CD4-positive, alpha-beta T cell (primary cell): ENCODE measurements at regions of chr4 and their contacts with region 1.

Region 1: GRCh38 chr4:182917182-182918043 is at the start of gene DCTD:
- DNase-seq: peak; percentile 54 to 90 (median 78)
- ATAC-seq: peak; percentile 78
- H3K4me3 ChIP-seq: peak within 1 kb of the TSS; percentile 85
- H3K4me3 Mint-ChIP-seq: peak within 1 kb of the TSS; percentile 93
- H3K27ac ChIP-seq: peak within 1 kb of the TSS; percentile 89 to 96
- H3K27ac Mint-ChIP-seq: peak within 1 kb of the TSS; percentile 89
- H3K4me1 ChIP-seq: peaks cover 42% of the 10 kb centered on the region
- H3K4me1 Mint-ChIP-seq: peaks cover 48% of the 10 kb centered on the region
- H3K27me3 ChIP-seq: no peaks in the 10 kb centered on the region
- H3K27me3 Mint-ChIP-seq: no peaks in the 10 kb centered on the region
- CTCF ChIP-seq: peak; percentile 42
- total RNA-seq, gene DCTD: 49.4 to 54.3 TPM

Region 2: GRCh38 chr4:183398227-183399125 is 481.1 kb after region 1 on chr4:
- CTCF ChIA-PET with region 1: no interaction called
- POLR2A ChIA-PET with region 1: interaction called, 3 read pairs
- intact Hi-C with region 1: loop called in 1 of 2 experiments (anchors 5 kb)
- DNase-seq: peak; percentile 35 to 82 (median 52)
- ATAC-seq: peak; percentile 90
- H3K4me3 ChIP-seq: peak overlapping the region; percentile 63
- H3K4me3 Mint-ChIP-seq: peak overlapping the region; percentile 90
- H3K27ac ChIP-seq: no peak overlapping the region
- H3K27ac Mint-ChIP-seq: no peak overlapping the region
- H3K4me1 ChIP-seq: peaks cover 18% of the 10 kb centered on the region
- H3K4me1 Mint-ChIP-seq: peaks cover 31% of the 10 kb centered on the region
- H3K27me3 ChIP-seq: peaks cover 0 to 4% of the 10 kb centered on the region in 2 experiments
- H3K27me3 Mint-ChIP-seq: peaks cover 22% of the 10 kb centered on the region
- CTCF ChIP-seq: peak; percentile 69

Region 3: DNA sequence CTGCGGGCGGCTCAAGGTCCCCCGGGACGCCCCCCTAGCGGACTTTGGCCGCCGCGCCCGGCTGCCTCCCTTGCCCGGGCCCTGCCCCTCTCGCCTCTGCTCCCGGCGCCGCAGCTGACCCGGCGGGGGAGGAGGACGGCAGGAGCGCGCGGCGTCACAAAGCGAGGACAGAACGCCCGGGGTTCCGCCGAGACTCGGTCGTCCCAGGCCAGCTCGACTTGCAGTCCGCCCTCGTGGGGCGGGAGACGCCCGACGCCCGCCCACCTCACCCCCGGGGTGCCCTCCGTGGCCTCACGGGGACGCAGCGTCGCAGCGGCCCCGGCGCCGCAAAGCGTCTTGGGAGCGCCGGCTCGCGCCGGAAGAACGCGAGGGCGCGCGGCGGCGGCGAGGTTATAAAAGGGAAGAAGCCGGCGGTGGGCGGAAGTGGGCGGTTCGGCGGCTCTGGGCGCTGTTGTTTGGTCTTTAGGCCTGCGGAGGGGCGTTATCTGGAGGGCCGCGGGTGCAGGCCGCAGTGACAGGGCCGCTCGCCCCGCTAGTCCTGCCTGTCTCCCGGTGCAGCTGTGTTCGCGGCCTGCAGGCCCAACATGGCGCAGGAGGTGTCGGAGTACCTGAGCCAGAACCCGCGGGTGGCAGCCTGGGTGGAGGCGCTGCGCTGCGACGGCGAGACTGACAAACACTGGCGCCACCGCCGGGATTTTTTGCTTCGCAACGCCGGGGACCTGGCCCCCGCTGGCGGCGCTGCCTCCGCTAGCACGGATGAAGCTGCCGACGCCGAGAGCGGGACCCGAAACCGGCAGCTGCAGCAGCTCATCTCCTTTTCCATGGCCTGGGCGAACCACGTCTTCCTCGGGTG is 527.0 kb after region 1 on chr4 and contains the start of gene CDKN2AIP:
- CTCF ChIA-PET with region 1: no interaction called
- POLR2A ChIA-PET with region 1: interaction called, 14 read pairs
- intact Hi-C with region 1: loop called in 1 of 2 experiments (anchors 5 kb)
- DNase-seq: peak; percentile 89 to 98 (median 94)
- ATAC-seq: peak; percentile 82
- H3K4me3 ChIP-seq: peak within 1 kb of the TSS; percentile 94
- H3K4me3 Mint-ChIP-seq: peak within 1 kb of the TSS; percentile 98
- H3K27ac ChIP-seq: peak within 1 kb of the TSS; percentile 91
- H3K27ac Mint-ChIP-seq: peak within 1 kb of the TSS; percentile 96
- H3K4me1 ChIP-seq: peaks cover 26% of the 10 kb centered on the region
- H3K4me1 Mint-ChIP-seq: peaks cover 55% of the 10 kb centered on the region
- H3K27me3 ChIP-seq: no peaks in the 10 kb centered on the region
- H3K27me3 Mint-ChIP-seq: no peaks in the 10 kb centered on the region
- CTCF ChIP-seq: no peak
- total RNA-seq, gene CDKN2AIP: 55.7 to 56.9 TPM

Region 4: DNA sequence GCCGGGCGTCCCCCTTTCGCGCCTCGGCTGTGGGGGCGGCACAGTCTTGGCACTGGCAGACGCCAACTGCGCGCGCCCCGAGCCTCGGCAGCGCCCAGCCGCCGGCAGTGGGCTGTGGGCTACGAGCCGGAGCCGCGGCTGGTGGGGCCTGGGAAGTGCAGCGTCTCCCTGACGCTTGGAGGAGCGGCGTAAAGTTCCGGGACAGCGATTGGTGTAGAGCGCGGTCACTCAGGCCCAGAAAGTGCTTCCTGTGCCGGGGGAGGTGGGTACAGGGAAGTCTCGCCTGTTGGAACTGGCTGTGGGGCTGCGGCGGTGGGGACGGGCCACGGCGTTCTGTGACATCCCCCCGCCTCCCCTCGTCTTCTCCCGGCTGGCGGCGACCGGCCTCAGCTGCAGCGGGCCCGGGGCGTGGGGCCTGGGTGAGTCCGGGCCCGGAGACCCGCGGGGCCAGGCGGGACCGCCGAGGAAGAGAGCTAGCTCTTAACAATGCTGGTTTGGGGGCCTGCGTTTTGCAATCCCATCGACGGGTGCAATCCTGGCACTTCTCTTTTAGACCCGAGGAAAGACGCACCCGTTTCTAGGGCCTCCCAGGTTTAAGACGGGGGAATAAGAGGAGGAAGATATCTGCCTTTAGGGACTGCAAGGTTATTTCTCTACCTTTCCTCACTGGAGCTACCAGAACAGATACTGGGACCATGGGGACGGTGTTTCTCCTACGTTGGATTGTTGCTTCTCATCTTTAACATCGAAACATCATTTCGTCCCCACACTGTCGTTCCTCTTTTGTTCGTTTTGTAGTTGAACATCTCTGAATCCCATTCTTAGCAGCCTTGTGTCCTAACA is 741.8 kb after region 1 on chr4 and contains the starts of genes RWDD4 and TRAPPC11:
- CTCF ChIA-PET with region 1: no interaction called
- POLR2A ChIA-PET with region 1: no interaction called
- intact Hi-C with region 1: loop called in 1 of 2 experiments (anchors 5 kb)
- DNase-seq: peak; percentile 92 to 99 (median 94)
- ATAC-seq: peak; percentile 99
- H3K4me3 ChIP-seq: peak within 1 kb of the TSS; percentile 81
- H3K4me3 Mint-ChIP-seq: peak within 1 kb of the TSS; percentile 94
- H3K27ac ChIP-seq: peak within 1 kb of the TSS; percentile 74 to 79
- H3K27ac Mint-ChIP-seq: peak within 1 kb of the TSS; percentile 93
- H3K4me1 ChIP-seq: peaks cover 24% of the 10 kb centered on the region
- H3K4me1 Mint-ChIP-seq: peaks cover 56% of the 10 kb centered on the region
- H3K27me3 ChIP-seq: no peaks in the 10 kb centered on the region
- H3K27me3 Mint-ChIP-seq: no peaks in the 10 kb centered on the region
- CTCF ChIP-seq: no peak
- total RNA-seq, gene RWDD4: 9.9 to 10.5 TPM
- total RNA-seq, gene TRAPPC11: 14.7 to 19.2 TPM